PC-3 (cell line): ENCODE measurements at regions of chr6 and their contacts with region 1.

Region 1: GRCh38 chr6:47413752-47414422 is 63.7 kb upstream of the CD2AP start:
- DNase-seq: peak; percentile 77
- ATAC-seq: peak; percentile 90
- H3K4me3 ChIP-seq: peak overlapping the region; percentile 64
- H3K27ac ChIP-seq: peak overlapping the region; percentile 41
- H3K4me1 ChIP-seq: peaks cover 12% of the 10 kb centered on the region; the same call in 1 of the 2 replicates
- H3K27me3 ChIP-seq: no peaks in the 10 kb centered on the region
- CTCF ChIP-seq: peak; percentile 96

Region 2: DNA sequence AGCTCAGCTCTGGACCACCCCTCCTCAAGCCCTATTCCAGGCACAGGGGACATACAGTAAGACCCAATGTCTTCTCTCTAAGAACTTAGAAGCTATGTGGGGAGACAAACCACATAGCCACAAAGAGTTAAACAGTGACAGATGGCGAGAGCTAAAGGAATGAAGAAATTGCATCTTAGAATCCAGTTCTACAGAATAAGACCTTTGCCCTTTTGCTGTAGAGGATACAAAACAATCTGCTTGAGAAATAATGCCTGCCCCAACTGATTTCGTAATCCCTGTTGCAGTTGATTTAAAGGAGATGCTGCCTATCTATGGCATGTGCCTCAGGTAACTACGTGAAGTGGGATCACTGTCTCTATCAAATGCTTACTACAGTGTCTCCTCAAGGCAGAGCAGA is 135.3 kb before region 1 on chr6:
- CTCF ChIA-PET with region 1: no interaction called
- POLR2A ChIA-PET with region 1: no interaction called
- intact Hi-C with region 1: no loop called
- DNase-seq: no peak
- ATAC-seq: no peak
- H3K4me3 ChIP-seq: no peak overlapping the region
- H3K27ac ChIP-seq: no peak overlapping the region
- H3K4me1 ChIP-seq: no peaks in the 10 kb centered on the region
- H3K27me3 ChIP-seq: no peaks in the 10 kb centered on the region
- CTCF ChIP-seq: no peak

Region 3: DNA sequence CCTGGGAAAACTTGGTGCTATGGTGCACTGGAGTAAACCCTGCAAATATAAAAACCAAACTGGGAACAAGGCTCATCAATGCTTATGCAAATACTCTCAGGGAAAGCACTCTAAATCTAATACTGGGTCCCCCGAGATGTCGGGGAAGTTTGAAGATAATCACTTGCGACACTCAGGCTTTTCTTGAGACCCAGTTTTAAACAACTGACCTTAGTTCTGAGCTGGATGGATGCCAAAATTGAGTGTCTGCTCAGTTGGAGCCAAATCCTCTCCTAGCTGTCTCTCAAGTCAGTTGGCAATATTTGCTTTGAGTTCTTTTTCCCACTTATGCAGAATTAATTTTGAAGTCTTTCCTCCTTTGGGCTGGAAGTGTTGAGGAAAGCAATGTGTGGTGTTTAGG is 11.8 kb before region 1 on chr6:
- CTCF ChIA-PET with region 1: no interaction called
- POLR2A ChIA-PET with region 1: no interaction called
- intact Hi-C with region 1: no loop called
- DNase-seq: no peak
- ATAC-seq: no peak
- H3K4me3 ChIP-seq: no peak overlapping the region
- H3K27ac ChIP-seq: no peak overlapping the region
- H3K4me1 ChIP-seq: peaks cover 39% of the 10 kb centered on the region
- H3K27me3 ChIP-seq: no peaks in the 10 kb centered on the region
- CTCF ChIP-seq: no peak

Region 4: GRCh38 chr6:47464052-47464451 is 50.2 kb after region 1 on chr6:
- CTCF ChIA-PET with region 1: no interaction called
- POLR2A ChIA-PET with region 1: no interaction called
- intact Hi-C with region 1: loop called (anchors 2 kb)
- DNase-seq: peak; percentile 92
- ATAC-seq: peak; percentile 74
- H3K4me3 ChIP-seq: no peak overlapping the region
- H3K27ac ChIP-seq: peak overlapping the region; percentile 65
- H3K4me1 ChIP-seq: peaks cover 33% of the 10 kb centered on the region
- H3K27me3 ChIP-seq: no peaks in the 10 kb centered on the region
- CTCF ChIP-seq: no peak

Region 5: DNA sequence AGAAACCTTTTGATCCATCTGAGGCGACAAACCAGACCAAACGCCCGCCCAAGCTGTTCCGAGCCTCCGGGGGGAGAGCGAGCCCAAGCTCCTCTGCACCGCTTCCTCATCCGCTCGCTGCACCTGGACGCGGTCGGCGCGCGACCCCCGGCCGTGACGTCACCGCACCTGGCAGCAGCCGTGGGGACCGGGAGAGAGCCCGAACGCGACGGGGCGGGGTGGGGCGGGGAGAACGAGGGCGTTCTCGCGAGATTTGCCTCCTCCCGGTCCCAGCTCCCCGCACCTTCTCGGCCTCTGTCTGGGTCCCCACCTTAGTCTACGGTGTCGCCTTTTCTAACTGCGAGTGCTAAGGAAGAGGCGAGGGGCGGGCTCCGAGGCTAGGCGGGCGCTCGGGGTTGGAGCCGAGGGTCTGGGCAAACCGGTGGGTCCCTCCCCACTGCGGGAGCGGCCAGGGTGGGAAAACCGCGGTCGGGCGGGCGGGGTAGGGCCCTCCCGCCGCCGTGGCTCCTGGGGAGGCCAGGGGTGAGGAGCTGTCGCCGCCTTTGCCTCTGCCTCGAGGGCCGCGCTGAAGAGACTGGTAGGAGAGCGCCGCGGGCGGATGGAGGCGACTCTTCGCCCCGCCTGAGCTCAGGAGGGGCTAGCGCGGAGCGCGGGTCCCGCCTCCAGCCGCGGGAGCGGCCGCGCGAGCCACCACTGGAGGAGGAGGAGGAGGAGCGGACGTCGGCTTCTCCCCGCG is 63.8 kb after region 1 on chr6 and contains the start of gene CD2AP:
- CTCF ChIA-PET with region 1: interaction called, 4 read pairs
- POLR2A ChIA-PET with region 1: interaction called, 4 read pairs
- intact Hi-C with region 1: loop called (anchors 1 kb)
- DNase-seq: peak; percentile 82
- ATAC-seq: peak; percentile 78
- H3K4me3 ChIP-seq: peak within 1 kb of the TSS; percentile 96
- H3K27ac ChIP-seq: peak within 1 kb of the TSS; percentile 84
- H3K4me1 ChIP-seq: peaks cover 26% of the 10 kb centered on the region
- H3K27me3 ChIP-seq: no peaks in the 10 kb centered on the region
- CTCF ChIP-seq: no peak
- total RNA-seq, gene CD2AP: 16.2 and 21.8 TPM in 2 replicates

Region 6: DNA sequence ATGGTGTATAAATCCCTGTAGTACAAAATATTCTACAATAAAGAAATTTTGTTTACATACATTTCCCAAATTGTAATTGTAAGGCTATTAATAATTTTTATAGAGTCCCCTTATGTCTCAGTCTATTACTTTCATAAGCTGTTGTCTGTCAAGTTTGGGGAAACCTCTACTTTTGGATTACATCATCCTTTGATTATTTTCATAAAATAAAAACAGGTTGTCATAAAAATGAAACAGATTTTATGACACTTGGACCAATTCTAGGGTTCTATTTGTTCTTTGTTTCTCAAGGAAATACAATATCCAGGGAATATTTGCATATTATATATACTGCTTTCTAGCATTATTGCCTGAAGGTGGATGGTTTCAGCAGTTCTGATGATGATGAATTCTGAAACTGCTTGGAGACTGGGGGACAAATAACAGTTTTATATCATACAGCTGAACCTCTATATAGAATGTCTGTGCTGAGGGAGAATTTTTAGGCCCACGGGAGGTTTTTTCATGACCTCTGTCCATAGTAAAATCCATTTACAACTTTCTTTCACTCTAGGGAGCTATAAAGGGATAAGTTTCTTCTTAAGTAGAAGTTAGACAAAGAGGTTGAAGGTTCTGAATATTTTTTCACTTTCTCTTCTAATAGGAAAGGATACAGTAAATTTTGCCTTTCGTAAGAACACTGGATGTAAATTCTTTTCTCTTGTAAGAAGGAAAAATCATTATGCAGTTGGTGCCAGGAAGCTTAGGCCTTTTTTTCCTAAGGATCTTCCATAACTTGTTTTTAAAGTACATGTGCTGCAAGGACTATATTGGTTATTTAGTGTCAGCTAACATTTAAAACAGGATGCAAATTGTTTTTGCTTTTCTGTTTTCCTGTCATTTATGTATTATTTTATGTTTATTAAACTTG is 121.7 kb after region 1 on chr6:
- CTCF ChIA-PET with region 1: no interaction called
- POLR2A ChIA-PET with region 1: no interaction called
- intact Hi-C with region 1: loop called (anchors 10 kb)
- DNase-seq: no peak
- ATAC-seq: no peak
- H3K4me3 ChIP-seq: no peak overlapping the region
- H3K27ac ChIP-seq: no peak overlapping the region
- H3K4me1 ChIP-seq: no peaks in the 10 kb centered on the region
- H3K27me3 ChIP-seq: no peaks in the 10 kb centered on the region
- CTCF ChIP-seq: no peak

Region 7: GRCh38 chr6:47631269-47631772 is 217.4 kb after region 1 on chr6:
- CTCF ChIA-PET with region 1: interaction called, 3 read pairs
- POLR2A ChIA-PET with region 1: no interaction called
- intact Hi-C with region 1: loop called (anchors 1 kb)
- DNase-seq: peak; percentile 92
- ATAC-seq: peak; percentile 61
- H3K4me3 ChIP-seq: no peak overlapping the region
- H3K27ac ChIP-seq: no peak overlapping the region
- H3K4me1 ChIP-seq: peaks cover 4% of the 10 kb centered on the region
- H3K27me3 ChIP-seq: no peaks in the 10 kb centered on the region
- CTCF ChIP-seq: peak; percentile 74

Region 8: DNA sequence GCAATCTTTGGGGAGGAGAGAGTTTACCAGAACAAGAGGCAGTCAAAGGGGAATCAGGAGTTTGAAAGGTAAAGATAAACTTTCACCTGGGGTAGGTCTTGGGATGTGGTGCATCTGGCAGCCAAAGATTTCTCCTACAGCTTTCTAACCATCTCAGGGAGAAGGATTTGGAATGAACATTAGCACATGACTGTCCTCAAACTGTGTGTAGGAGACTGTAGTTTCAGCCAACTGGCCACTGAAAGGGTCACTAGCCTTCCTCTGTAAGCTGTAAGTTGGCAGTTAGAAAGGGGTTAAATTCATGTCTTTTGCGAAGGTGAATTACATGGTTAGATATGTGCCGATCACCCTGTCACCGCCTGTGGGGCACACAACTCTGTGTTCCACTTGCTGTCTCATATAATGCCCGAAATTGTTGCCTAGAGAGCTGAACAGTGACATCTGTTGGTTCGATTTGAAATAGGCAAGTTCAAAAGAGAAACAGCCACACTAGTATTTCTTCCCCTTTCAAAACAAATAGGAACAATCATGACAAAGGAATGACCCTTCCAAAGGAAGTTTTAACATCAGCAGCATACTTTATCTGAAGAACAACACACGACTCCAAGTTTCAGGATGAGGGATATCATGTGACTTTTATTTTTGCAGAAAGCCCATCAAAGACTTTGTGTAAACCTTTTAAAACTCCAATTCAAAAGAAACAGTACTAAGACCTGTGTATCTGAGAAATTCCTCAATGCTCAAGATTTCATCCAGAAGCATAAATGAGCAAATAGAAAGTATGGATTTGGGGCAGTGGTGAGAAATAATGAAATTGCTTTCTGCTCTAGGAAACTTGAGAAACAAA is 366.8 kb after region 1 on chr6:
- CTCF ChIA-PET with region 1: no interaction called
- POLR2A ChIA-PET with region 1: no interaction called
- intact Hi-C with region 1: loop called (anchors 1 kb)
- DNase-seq: peak; percentile 89
- ATAC-seq: peak; percentile 97
- H3K4me3 ChIP-seq: peak overlapping the region; percentile 39; the same call in 1 of the 2 replicates
- H3K27ac ChIP-seq: no peak overlapping the region
- H3K4me1 ChIP-seq: peaks cover 10% of the 10 kb centered on the region
- H3K27me3 ChIP-seq: no peaks in the 10 kb centered on the region
- CTCF ChIP-seq: peak; percentile 92